Mammary epithelial cell (primary cell): ENCODE measurements at regions of chr6 and their contacts with region 1.

Region 1: GRCh38 chr6:33585403-33586107 is 5.5 kb upstream of the BAK1 start:
- DNase-seq: peak; percentile 69
- H3K4me3 ChIP-seq: no peak overlapping the region
- H3K27ac ChIP-seq: no peak overlapping the region
- H3K4me1 ChIP-seq: peaks cover 21% of the 10 kb centered on the region
- H3K27me3 ChIP-seq: no peaks in the 10 kb centered on the region
- CTCF ChIP-seq: peak; percentile 98 to 99

Region 2: GRCh38 chr6:33508935-33509926 is 76.3 kb before region 1 on chr6:
- CTCF ChIA-PET with region 1: no interaction called
- dilution Hi-C with region 1: no loop called
- in situ Hi-C with region 1: no loop called
- intact Hi-C with region 1: no loop called
- DNase-seq: no peak
- H3K4me3 ChIP-seq: no peak overlapping the region
- H3K27ac ChIP-seq: no peak overlapping the region
- H3K4me1 ChIP-seq: no peaks in the 10 kb centered on the region
- H3K27me3 ChIP-seq: no peaks in the 10 kb centered on the region
- CTCF ChIP-seq: no peak

Region 3: GRCh38 chr6:33547499-33547898 is 38.1 kb before region 1 on chr6:
- CTCF ChIA-PET with region 1: no interaction called
- dilution Hi-C with region 1: loop called (anchors 5 kb)
- in situ Hi-C with region 1: no loop called
- intact Hi-C with region 1: no loop called
- DNase-seq: no peak
- H3K4me3 ChIP-seq: no peak overlapping the region
- H3K27ac ChIP-seq: no peak overlapping the region
- H3K4me1 ChIP-seq: peaks cover 4% of the 10 kb centered on the region
- H3K27me3 ChIP-seq: no peaks in the 10 kb centered on the region
- CTCF ChIP-seq: no peak

Region 4: DNA sequence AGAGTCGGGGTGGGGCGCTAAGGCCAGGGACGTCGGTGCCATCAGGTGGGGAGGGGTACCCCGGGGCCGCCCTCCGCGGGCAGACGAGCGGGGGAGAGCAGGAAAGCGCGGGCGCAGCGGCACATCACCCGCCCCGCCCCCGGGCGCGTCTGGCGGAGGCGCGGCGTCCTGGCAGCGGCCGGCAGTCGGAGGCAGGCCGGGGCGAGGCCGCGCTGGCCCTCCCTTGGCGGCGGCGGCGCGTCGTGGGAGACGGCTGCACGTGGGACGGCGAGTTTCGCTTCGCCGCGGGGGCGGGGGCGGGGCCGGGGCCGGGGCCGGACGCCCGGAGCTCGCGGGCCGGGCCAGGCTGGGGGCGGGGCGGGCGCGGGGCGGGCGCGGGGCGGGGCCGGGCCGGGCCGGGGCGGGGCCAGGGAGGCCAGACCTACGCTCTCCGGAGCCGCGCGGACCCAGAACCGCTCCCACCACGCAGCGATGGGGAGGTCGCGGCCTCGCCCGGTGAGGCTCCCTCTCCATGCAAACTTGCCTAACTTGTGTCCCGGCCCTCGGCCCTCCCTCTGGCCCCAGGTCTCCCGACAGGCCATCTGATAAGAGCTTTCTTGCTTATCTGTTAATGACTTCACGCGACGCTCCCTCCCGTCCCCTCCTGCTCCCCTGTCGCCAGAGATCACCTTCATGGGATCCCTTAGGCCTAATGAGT is 48.1 kb after region 1 on chr6:
- CTCF ChIA-PET with region 1: no interaction called
- dilution Hi-C with region 1: no loop called
- in situ Hi-C with region 1: no loop called
- intact Hi-C with region 1: loop called (anchors 1 kb)
- DNase-seq: peak; percentile 74
- H3K4me3 ChIP-seq: peak overlapping the region in 2 of 3 experiments; percentile 37 to 52
- H3K27ac ChIP-seq: no peak overlapping the region
- H3K4me1 ChIP-seq: peaks cover 24% of the 10 kb centered on the region
- H3K27me3 ChIP-seq: no peaks in the 10 kb centered on the region
- CTCF ChIP-seq: no peak

Region 5: GRCh38 chr6:33672808-33673207 is 87.3 kb after region 1 on chr6:
- CTCF ChIA-PET with region 1: interaction called, 8 read pairs
- dilution Hi-C with region 1: no loop called
- in situ Hi-C with region 1: loop called in 1 of 2 experiments (anchors 10 kb)
- intact Hi-C with region 1: loop called (anchors 1 kb)
- DNase-seq: peak; percentile 88
- H3K4me3 ChIP-seq: no peak overlapping the region
- H3K27ac ChIP-seq: no peak overlapping the region
- H3K4me1 ChIP-seq: peaks cover 16% of the 10 kb centered on the region
- H3K27me3 ChIP-seq: no peaks in the 10 kb centered on the region
- CTCF ChIP-seq: peak in 1 of 2 donors; percentile 59

Region 6: DNA sequence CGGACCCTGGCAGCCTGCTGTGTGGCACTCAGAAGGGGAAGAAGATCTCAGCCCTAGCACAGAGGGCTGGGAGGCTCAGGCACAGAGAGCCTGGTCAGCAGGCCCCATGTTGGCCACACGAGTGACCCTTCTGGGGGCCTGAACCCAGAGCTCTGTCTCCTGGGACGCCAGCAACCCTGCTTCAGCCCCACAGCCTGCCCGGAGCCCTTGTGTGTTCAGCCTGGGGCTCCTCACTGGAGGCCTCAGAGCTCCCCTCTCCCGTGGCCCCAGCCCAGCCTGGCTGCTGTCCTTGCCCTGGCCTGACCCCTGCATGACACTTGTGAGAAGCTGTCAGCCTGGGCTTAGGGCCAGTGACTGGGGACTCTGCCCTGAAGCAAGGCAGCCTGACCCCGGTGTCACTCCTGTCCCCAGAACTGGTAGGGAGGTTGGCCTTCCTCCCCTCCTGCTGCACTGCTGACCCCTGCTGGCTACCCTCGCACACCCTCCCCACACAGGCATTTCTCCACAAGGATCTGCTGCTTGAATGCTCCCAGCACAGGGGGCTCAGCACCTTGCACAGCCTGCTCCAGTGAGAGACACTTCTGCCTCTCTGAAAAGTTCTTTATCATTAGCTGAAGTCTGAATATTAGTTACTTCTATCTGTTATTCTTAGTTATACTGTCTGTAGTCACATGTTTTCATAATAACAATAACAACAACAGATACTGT is 176.5 kb after region 1 on chr6:
- CTCF ChIA-PET with region 1: no interaction called
- dilution Hi-C with region 1: loop called (anchors 5 kb)
- in situ Hi-C with region 1: no loop called
- intact Hi-C with region 1: loop called (anchors 1 kb)
- DNase-seq: peak; percentile 30
- H3K4me3 ChIP-seq: no peak overlapping the region
- H3K27ac ChIP-seq: no peak overlapping the region
- H3K4me1 ChIP-seq: no peaks in the 10 kb centered on the region
- H3K27me3 ChIP-seq: no peaks in the 10 kb centered on the region
- CTCF ChIP-seq: peak; percentile 68 to 91

Region 7: DNA sequence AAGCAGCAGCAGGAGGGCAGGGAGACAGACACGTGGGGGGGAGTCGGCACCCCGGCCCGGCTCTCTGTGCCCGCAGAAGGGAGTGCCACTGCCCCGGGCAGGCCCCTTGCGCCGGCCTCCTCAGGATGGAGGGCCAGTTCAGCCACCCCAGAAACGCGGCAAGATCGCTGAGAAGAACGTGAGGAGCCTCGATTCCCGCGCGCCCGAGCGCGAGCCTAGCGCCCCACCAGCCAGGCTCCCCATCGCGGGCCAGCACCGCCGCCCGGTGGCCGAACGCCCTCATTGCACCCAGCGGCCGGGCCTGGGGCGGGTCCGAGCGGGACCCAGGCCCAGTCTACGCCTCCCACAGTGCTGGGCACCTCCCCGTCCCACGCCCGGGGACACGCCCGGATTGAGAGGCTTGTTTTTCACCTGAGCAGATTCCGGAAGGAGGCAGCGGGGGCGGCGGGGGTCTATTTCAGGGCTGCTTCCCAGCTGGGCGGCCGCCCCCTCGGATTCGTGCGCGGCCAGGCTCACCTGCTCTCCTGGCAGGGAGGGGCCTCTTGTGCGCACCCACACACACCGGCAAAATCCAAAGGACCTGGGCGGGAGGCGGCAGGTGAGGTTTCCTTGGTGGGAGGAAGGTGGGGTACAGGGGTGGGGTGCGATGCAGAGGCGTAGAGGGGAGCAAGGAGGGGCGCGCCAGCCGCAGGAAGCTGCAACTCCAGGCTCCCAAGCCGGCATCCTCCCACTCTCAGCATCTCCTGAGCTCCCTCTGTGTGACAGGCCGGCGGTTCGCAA is 569.3 kb after region 1 on chr6:
- CTCF ChIA-PET with region 1: no interaction called
- dilution Hi-C with region 1: no loop called
- in situ Hi-C with region 1: loop called in 1 of 2 experiments (anchors 25 kb)
- intact Hi-C with region 1: loop called (anchors 1 kb)
- DNase-seq: no peak
- H3K4me3 ChIP-seq: peak overlapping the region in 1 of 3 experiments; percentile 34
- H3K27ac ChIP-seq: no peak overlapping the region
- H3K4me1 ChIP-seq: peaks cover 8% of the 10 kb centered on the region
- H3K27me3 ChIP-seq: peaks cover 5% of the 10 kb centered on the region
- CTCF ChIP-seq: peak; percentile 86 to 99